Activated B cell treated with CpG ODN at 0.5 μM for 24 hours (primary cell): ENCODE measurements at regions of chr3 and their contacts with region 1.

Region 1: DNA sequence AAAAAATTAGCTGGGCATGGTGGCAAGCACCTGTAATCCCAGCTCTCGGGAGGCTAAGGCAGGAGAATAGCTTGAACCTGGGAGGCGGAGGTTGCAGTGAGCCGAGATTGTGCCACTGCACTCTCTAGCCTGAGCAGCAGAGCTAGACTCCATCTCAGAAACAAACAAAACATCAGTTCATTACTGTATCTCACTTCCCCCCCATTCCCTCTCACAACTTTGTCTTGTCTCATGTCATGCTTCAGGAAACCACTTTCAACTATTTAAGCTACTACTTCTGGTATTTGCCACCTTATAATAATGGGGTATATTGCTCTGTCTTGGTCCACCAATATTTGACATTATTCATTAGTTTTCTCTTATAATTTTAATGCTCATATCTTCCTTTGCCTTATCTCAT is 26.2 kb downstream of the PIK3CA start:
- DNase-seq: no peak
- ATAC-seq: peak; percentile 60
- H3K4me3 Mint-ChIP-seq: peak overlapping the region; percentile 48
- H3K27ac Mint-ChIP-seq: peak overlapping the region; percentile 31
- H3K4me1 Mint-ChIP-seq: peaks cover 57% of the 10 kb centered on the region
- H3K27me3 Mint-ChIP-seq: no peaks in the 10 kb centered on the region
- CTCF ChIP-seq: no peak

Region 2: GRCh38 chr3:178900029-178900646 is 274.2 kb before region 1 on chr3:
- CTCF ChIA-PET with region 1: no interaction called
- POLR2A ChIA-PET with region 1: no interaction called
- intact Hi-C with region 1: no loop called
- DNase-seq: no peak
- ATAC-seq: no peak
- H3K4me3 Mint-ChIP-seq: no peak overlapping the region
- H3K27ac Mint-ChIP-seq: no peak overlapping the region
- H3K4me1 Mint-ChIP-seq: no peaks in the 10 kb centered on the region
- H3K27me3 Mint-ChIP-seq: no peaks in the 10 kb centered on the region
- CTCF ChIP-seq: no peak

Region 3: GRCh38 chr3:179133575-179133974 is 40.7 kb before region 1 on chr3:
- CTCF ChIA-PET with region 1: no interaction called
- POLR2A ChIA-PET with region 1: no interaction called
- intact Hi-C with region 1: no loop called
- DNase-seq: no peak
- ATAC-seq: no peak
- H3K4me3 Mint-ChIP-seq: no peak overlapping the region
- H3K27ac Mint-ChIP-seq: no peak overlapping the region
- H3K4me1 Mint-ChIP-seq: peaks cover 10% of the 10 kb centered on the region
- H3K27me3 Mint-ChIP-seq: no peaks in the 10 kb centered on the region
- CTCF ChIP-seq: no peak

Region 4: DNA sequence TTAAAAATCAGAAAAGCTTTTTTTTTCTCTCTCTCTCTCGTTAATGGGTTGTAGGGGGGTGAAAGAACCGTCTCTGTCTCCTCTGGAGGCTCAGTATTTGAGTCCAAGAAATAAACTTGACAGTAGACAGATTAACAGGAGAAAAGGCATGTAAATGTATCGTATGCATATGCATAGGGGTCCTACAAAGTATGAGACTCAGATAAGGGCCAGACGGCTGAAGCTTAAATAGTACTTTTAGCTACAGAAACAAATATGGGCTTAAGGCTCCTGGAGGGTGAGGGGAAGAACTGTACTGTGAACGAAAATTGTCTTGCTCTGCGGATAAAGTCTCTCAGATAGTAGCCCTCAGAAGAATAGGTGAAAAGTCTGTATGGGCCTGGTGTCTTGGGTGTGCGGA is 16.3 kb after region 1 on chr3:
- CTCF ChIA-PET with region 1: no interaction called
- POLR2A ChIA-PET with region 1: no interaction called
- intact Hi-C with region 1: no loop called
- DNase-seq: no peak
- ATAC-seq: no peak
- H3K4me3 Mint-ChIP-seq: no peak overlapping the region
- H3K27ac Mint-ChIP-seq: no peak overlapping the region
- H3K4me1 Mint-ChIP-seq: peaks cover 56% of the 10 kb centered on the region
- H3K27me3 Mint-ChIP-seq: no peaks in the 10 kb centered on the region
- CTCF ChIP-seq: no peak

Region 5: DNA sequence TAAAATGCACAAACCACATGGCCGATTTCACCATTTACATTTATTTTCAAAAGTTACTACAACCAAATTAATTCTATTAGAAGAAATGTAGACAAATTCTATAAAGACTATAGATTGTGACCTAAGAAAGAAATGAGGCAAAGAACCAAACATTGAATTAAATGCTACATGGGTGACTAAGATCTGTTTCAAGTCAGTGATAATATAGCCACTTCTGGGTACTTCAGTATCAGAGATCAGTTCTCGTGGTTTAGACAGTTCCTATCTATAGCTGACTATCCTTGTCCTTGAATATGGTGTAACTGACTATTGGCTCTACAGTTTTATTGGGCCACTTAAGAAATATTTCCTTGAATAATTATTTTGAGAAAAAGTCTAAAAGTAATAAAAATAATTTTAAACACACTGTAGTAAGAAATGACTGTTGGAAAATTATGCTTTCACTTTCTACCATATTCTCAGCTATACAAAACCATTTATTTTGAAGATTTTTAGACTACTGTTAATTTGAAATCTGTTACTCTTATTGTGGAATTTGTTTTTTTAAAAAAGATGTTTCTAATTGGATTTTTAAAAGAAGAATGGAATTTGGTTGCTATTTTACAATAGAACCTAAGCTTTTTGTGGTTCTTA is 62.5 kb after region 1 on chr3:
- CTCF ChIA-PET with region 1: no interaction called
- POLR2A ChIA-PET with region 1: interaction called, 13 read pairs
- intact Hi-C with region 1: no loop called
- DNase-seq: no peak
- ATAC-seq: no peak
- H3K4me3 Mint-ChIP-seq: no peak overlapping the region
- H3K27ac Mint-ChIP-seq: no peak overlapping the region
- H3K4me1 Mint-ChIP-seq: peaks cover 8% of the 10 kb centered on the region
- H3K27me3 Mint-ChIP-seq: no peaks in the 10 kb centered on the region
- CTCF ChIP-seq: no peak